OCI-LY7 (cell line): ENCODE measurements at regions of chr3 and their contacts with region 1.

Region 1: DNA sequence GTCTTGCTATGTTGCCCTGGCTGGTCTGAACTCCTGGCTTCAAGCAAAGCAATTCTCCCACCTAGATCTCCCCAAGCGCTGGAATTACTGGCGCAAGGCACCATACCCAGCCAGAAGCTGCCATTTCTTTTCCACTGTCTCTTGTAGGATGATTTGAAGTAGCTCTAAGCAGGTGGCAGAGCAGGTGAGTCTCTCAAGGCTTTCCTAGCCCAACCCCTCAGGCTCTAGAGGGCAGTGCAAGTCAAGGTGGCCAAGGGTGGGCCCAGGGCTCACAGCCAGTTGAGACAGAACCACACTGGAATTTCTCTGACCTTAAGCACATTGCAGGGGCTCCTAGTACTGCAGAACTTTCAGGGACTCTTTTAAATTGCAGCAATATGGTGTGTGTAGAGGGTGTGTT is 15.6 kb upstream of the DAG1 start:
- DNase-seq: peak; percentile 53
- H3K4me3 ChIP-seq: no peak overlapping the region
- H3K27ac ChIP-seq: no peak overlapping the region
- H3K4me1 ChIP-seq: no peaks in the 10 kb centered on the region
- CTCF ChIP-seq: peak; percentile 68

Region 2: GRCh38 chr3:49171119-49171774 is 283.2 kb before region 1 on chr3 and contains the start of gene KLHDC8B:
- CTCF ChIA-PET with region 1: no interaction called
- POLR2A ChIA-PET with region 1: no interaction called
- intact Hi-C with region 1: loop called (anchors 1 kb)
- DNase-seq: peak; percentile 76
- H3K4me3 ChIP-seq: peak within 1 kb of the TSS; percentile 60
- H3K27ac ChIP-seq: no peak within 1 kb of the TSS
- H3K4me1 ChIP-seq: peaks cover 11% of the 10 kb centered on the region
- CTCF ChIP-seq: peak; percentile 91
- total RNA-seq, gene KLHDC8B: 0.69 TPM in 1 of 2 replicates, not detected in the other

Region 3: DNA sequence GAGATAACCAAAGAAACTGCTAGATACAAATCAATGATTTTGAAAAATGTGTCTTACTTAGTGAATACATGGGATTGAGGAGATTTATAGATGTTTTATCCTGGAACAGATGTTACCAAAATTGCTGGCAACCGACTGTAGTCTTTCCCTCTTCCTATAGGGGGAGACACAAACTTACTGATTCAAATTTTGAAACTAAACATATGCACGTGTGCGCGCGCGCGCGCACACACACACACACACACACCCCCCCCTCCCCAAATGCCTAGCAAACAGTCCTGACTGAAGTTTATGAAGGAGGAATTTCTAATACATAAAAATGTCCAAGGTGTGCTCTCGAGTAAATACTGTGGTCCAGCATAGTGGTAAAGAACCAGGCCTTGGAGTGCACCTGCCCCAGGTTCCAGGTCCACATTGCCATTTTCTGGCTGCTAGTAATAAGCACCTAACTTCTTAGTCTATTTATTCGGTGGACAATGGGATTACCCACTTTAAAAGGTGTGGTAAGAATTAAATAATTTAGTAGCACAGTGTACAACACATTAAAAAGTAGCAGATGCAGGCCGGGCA is 158.9 kb before region 1 on chr3:
- CTCF ChIA-PET with region 1: no interaction called
- POLR2A ChIA-PET with region 1: no interaction called
- intact Hi-C with region 1: loop called (anchors 1 kb)
- DNase-seq: peak; percentile 41
- H3K4me3 ChIP-seq: no peak overlapping the region
- H3K27ac ChIP-seq: no peak overlapping the region
- H3K4me1 ChIP-seq: no peaks in the 10 kb centered on the region
- CTCF ChIP-seq: peak; percentile 91